ENCODE measurements at regions of chr4 and their contacts with region 1.

Region 1: DNA sequence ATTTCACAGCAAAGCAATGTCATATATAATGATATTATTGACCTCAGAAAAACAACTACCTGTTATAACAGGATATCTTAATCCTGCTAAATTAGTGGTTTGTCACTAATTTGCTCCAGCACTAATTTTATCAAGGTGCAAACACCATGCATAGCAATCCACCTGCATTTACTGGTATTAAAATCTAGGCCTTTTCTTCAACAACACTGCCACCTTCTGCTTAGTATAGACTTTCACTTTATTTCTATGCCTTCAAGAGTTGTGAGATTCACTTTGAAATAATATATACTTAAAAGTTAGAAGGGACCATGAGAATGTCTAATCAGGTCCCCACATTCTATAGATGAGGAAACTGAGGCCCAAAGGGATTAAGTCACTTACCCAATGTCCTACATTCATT is 82.1 kb upstream of the IQCM start:
- DNase-seq: no peak
- ATAC-seq: peak in 1 of 4 donors; percentile 52
- H3K4me3 ChIP-seq: no peak overlapping the region
- H3K27ac ChIP-seq: no peak overlapping the region
- H3K4me1 ChIP-seq: no peaks in the 10 kb centered on the region
- H3K27me3 ChIP-seq: no peaks in the 10 kb centered on the region
- CTCF ChIP-seq: peak in 10 of 12 donors; percentile 17 to 56 (median 44)
- POLR2A ChIP-seq: no peak

Region 2: GRCh38 chr4:149370785-149371420 is 526.9 kb before region 1 on chr4:
- intact Hi-C with region 1: loop called in 9 of 10 experiments (anchors 1 to 5 kb)
- DNase-seq: peak in 1 of 5 donors; percentile 42
- ATAC-seq: peak; percentile 58 to 74 (median 69)
- H3K4me3 ChIP-seq: no peak overlapping the region
- H3K27ac ChIP-seq: no peak overlapping the region
- H3K4me1 ChIP-seq: peaks cover 0 to 7% (median 0%) of the 10 kb centered on the region in 12 donors
- H3K27me3 ChIP-seq: no peaks in the 10 kb centered on the region
- CTCF ChIP-seq: peak; percentile 14 to 57 (median 42)
- POLR2A ChIP-seq: no peak

Region 3: DNA sequence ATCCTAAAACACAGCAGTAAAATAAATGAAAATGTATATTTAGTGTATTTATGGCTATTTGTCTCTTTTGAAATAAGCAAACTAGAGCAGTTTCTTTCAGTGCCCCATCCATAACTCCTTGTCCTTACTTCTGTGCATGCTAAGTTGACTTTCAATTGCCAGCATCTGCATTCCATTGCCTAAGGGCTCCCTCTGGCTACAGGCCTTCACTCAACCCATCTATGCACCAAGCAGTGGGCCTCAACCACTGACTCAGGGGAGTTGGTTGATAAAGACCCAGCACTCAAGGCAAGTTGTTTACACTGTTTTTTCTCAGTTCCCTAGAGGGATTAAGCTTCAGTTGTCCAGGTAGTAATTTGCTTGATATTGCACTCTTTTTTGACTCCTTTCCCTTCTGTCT is 347.9 kb before region 1 on chr4:
- intact Hi-C with region 1: loop called in 3 of 10 experiments (anchors 5 to 10 kb)
- DNase-seq: peak in 3 of 5 donors; percentile 6 to 23 (median 16)
- ATAC-seq: peak in 3 of 4 donors; percentile 60 to 70 (median 69)
- H3K4me3 ChIP-seq: no peak overlapping the region
- H3K27ac ChIP-seq: no peak overlapping the region
- H3K4me1 ChIP-seq: no peaks in the 10 kb centered on the region
- H3K27me3 ChIP-seq: no peaks in the 10 kb centered on the region
- CTCF ChIP-seq: peak in 9 of 12 donors; percentile 12 to 59 (median 40)
- POLR2A ChIP-seq: no peak

Region 4: DNA sequence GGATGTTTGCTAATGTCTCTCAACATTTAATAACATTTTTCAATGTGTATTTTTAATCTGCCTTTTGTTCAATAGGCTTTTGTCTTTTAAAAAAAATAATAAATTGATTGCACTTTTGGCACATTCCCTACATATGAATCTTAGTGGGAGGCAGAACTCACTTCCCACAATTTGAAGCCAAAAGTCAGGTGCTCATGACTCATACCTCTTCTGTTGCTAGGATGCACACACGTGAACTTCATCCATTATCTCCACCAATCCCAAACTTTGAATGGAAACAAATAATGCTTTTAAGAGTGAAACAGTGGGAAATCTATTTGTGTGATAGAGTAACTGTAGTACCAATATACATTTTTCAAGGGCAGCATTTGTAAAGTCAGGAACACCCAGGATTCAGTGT is 342.6 kb before region 1 on chr4:
- intact Hi-C with region 1: loop called in 3 of 10 experiments (anchors 5 to 10 kb)
- DNase-seq: no peak
- ATAC-seq: no peak
- H3K4me3 ChIP-seq: no peak overlapping the region
- H3K27ac ChIP-seq: no peak overlapping the region
- H3K4me1 ChIP-seq: no peaks in the 10 kb centered on the region
- H3K27me3 ChIP-seq: no peaks in the 10 kb centered on the region
- CTCF ChIP-seq: no peak
- POLR2A ChIP-seq: no peak

Region 5: GRCh38 chr4:149790172-149790907 is 107.4 kb before region 1 on chr4:
- intact Hi-C with region 1: loop called in 1 of 10 experiments (anchors 10 kb)
- DNase-seq: no peak
- ATAC-seq: peak in 1 of 4 donors; percentile 53
- H3K4me3 ChIP-seq: no peak overlapping the region
- H3K27ac ChIP-seq: no peak overlapping the region
- H3K4me1 ChIP-seq: peaks cover 0 to 4% (median 0%) of the 10 kb centered on the region in 12 donors
- H3K27me3 ChIP-seq: no peaks in the 10 kb centered on the region
- CTCF ChIP-seq: no peak
- POLR2A ChIP-seq: no peak